Activated CD8-positive, alpha-beta memory T cell treated with anti-CD3 and anti-CD28 coated beads, Interleukin-2, amount 10 ng/mL, durations not matched to agents 7 days and 5 days (primary cell): ENCODE measurements at regions of chr3 and their contacts with region 1.

Region 1: GRCh38 chr3:148955544-148956346 is 35.6 kb upstream of the GYG1 start:
- DNase-seq: peak; percentile 46
- ATAC-seq: peak; percentile 43
- H3K4me3 Mint-ChIP-seq: no peak overlapping the region
- H3K27ac Mint-ChIP-seq: no peak overlapping the region
- H3K4me1 Mint-ChIP-seq: peaks cover 13% of the 10 kb centered on the region
- H3K27me3 Mint-ChIP-seq: peaks cover 7% of the 10 kb centered on the region

Region 2: DNA sequence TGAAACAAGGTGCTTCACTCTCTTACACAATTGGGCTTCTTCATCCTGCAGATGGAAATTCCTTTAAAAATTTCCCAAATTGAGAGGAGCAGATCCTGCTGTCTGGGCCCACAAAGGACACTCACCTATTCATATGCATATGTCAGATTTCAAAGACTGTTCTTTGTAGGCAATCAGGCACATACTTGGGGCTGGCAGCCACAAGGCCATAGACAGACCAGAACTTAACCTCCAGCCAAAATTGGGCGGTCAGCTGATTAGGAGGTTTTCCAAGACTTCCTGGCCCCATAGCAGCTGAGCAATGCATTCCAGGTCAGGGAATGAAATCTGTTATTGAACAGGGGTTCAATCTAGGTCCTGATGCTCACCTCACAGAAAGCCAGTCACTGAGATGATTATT is 158.7 kb after region 1 on chr3:
- CTCF ChIA-PET with region 1: interaction called, 83 read pairs
- DNase-seq: no peak
- ATAC-seq: no peak
- H3K4me3 Mint-ChIP-seq: no peak overlapping the region
- H3K27ac Mint-ChIP-seq: no peak overlapping the region
- H3K4me1 Mint-ChIP-seq: no peaks in the 10 kb centered on the region
- H3K27me3 Mint-ChIP-seq: no peaks in the 10 kb centered on the region

Region 3: GRCh38 chr3:149120051-149120972 is 164.6 kb after region 1 on chr3:
- CTCF ChIA-PET with region 1: interaction called, 83 read pairs
- DNase-seq: no peak
- ATAC-seq: peak; percentile 83
- H3K4me3 Mint-ChIP-seq: no peak overlapping the region
- H3K27ac Mint-ChIP-seq: no peak overlapping the region
- H3K4me1 Mint-ChIP-seq: peaks cover 5% of the 10 kb centered on the region
- H3K27me3 Mint-ChIP-seq: peaks cover 2% of the 10 kb centered on the region

Region 4: GRCh38 chr3:149129326-149130205 is 173.8 kb after region 1 on chr3 and contains the start of gene HPS3:
- CTCF ChIA-PET with region 1: interaction called, 14 read pairs
- DNase-seq: peak; percentile 91
- ATAC-seq: peak; percentile 93
- H3K4me3 Mint-ChIP-seq: peak within 1 kb of the TSS; percentile 87
- H3K27ac Mint-ChIP-seq: peak within 1 kb of the TSS; percentile 85
- H3K4me1 Mint-ChIP-seq: peaks cover 33% of the 10 kb centered on the region
- H3K27me3 Mint-ChIP-seq: peaks cover 14% of the 10 kb centered on the region
- total RNA-seq, gene HPS3: 32.5 to 36.0 TPM

Region 5: GRCh38 chr3:149273096-149273751 is 317.5 kb after region 1 on chr3:
- CTCF ChIA-PET with region 1: interaction called, 77 read pairs
- DNase-seq: peak; percentile 47
- ATAC-seq: peak; percentile 81
- H3K4me3 Mint-ChIP-seq: no peak overlapping the region
- H3K27ac Mint-ChIP-seq: no peak overlapping the region
- H3K4me1 Mint-ChIP-seq: peaks cover 13% of the 10 kb centered on the region
- H3K27me3 Mint-ChIP-seq: peaks cover 3% of the 10 kb centered on the region